Tibial artery (tissue), 4 donors: ENCODE measurements at regions of chr5 and their contacts with region 1.

Region 1: DNA sequence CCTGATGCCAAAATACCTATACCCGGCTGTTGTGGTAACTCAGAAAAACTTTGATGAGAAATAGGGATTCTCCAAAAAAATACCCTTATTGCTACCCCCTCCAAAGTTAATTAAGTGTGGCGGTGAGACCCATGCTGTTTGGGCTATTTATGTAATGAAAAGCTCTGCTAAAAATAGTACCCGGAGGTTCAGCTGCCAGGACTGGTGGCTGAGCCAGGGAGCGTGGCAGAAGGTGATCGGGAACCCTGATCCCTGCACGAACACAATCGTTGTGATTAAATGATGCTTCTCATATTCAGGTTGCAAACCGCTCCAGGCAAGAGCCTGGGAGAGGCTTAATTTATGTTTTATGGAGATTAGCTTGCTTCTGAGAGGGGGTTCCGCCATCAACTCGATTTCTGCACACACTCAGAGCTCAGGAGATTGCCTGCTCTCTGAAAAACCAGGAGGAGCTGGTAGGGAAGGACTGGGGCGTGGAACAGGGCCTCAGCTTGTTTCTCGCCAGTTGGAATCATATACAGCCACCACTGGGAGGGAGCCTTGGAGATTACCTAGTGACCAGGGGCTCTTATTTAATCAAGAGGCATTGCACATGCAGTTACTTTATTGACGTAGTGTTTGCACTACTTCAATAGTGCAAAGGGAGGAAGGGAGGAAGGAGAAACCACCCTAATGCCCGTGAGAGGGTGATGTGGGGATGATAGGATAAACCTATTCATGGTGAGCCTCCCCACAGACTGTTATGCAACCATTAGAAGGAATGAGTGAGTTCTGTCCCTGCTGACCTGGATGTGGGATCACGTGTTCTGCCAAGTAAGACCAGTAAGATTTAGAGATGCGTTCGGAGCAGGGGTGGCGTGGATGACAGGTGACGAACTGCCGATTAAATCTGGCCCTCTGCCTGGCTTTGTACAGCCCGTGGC is 23.4 kb downstream of the HRH2 start:
- DNase-seq: peak in 1 of 2 donors; percentile 61
- H3K4me3 ChIP-seq: no peak overlapping the region
- H3K27ac ChIP-seq: no peak overlapping the region
- H3K4me1 ChIP-seq: peaks cover 0 to 28% (median 11%) of the 10 kb centered on the region in 4 donors
- H3K27me3 ChIP-seq: no peaks in the 10 kb centered on the region
- CTCF ChIP-seq: no peak

Region 2: DNA sequence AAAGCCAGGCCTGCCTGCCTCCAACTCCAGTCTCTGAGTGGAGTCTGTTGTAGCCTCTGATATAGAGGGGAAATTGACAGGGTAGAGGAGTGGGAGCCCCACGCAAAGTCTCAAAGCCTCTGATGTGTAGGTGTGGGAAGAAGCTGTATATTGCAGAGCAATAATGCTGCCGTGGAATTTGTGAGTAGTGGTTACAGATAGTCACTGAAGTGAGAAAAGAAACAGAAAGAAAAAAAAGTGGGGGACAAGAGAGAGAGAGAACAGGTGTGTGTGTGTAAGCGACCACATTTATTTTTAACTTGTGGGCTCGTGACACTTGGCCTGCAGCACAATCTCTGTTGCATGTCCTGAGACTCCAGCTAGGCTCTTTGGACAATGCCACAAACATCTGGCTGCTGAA is 1408.0 kb before region 1 on chr5:
- intact Hi-C with region 1: loop called (anchors 5 kb)
- DNase-seq: no peak
- H3K4me3 ChIP-seq: no peak overlapping the region
- H3K27ac ChIP-seq: no peak overlapping the region
- H3K4me1 ChIP-seq: no peaks in the 10 kb centered on the region
- H3K27me3 ChIP-seq: no peaks in the 10 kb centered on the region
- CTCF ChIP-seq: no peak